Mammary epithelial cell (primary cell): ENCODE measurements at regions of chr3 and their contacts with region 1.

Region 1: DNA sequence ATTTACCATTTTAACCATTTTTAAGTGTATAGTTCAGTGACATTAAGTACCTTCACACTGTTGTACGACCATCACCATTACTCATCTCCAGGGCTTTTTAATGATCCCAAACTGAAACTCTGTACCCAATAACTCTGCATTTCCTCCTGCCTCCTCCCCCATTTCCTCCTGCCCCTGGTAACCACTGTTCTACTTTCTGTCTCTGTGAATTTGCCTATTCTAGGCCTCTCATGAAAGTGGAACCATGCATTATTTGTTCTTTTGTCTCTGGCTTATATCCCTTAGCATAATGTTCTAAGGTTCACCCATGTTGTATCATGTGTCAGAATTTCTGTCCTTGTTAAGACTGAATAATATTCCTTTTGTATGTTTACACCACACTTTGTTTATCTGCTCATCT is 154.2 kb downstream of the MECOM start:
- DNase-seq: no peak
- H3K4me3 ChIP-seq: no peak overlapping the region
- H3K27ac ChIP-seq: no peak overlapping the region
- H3K4me1 ChIP-seq: no peaks in the 10 kb centered on the region
- H3K27me3 ChIP-seq: no peaks in the 10 kb centered on the region
- CTCF ChIP-seq: no peak

Region 2: DNA sequence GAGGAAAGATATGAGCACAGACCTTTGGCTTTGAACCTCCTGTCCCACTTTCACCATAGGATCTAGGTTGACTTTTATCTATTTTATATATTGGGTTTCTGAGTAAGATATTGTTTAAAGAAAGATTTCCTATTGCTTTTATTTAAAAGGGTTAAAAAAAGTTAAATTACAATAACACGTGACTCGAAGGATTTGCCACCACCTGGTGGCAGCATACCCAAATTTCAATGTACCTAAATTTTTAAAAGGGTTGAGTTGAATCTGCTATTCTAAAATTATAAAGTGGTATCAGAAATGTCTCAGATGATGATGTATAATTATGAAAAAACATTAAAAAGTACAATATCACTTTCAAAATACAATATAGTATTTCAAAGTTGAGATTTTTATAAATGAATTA is 214.2 kb before region 1 on chr3:
- CTCF ChIA-PET with region 1: no interaction called
- dilution Hi-C with region 1: no loop called
- in situ Hi-C with region 1: no loop called
- intact Hi-C with region 1: loop called (anchors 1 kb)
- DNase-seq: no peak
- H3K4me3 ChIP-seq: no peak overlapping the region
- H3K27ac ChIP-seq: no peak overlapping the region
- H3K4me1 ChIP-seq: no peaks in the 10 kb centered on the region
- H3K27me3 ChIP-seq: no peaks in the 10 kb centered on the region
- CTCF ChIP-seq: peak; percentile 21 to 43

Region 3: DNA sequence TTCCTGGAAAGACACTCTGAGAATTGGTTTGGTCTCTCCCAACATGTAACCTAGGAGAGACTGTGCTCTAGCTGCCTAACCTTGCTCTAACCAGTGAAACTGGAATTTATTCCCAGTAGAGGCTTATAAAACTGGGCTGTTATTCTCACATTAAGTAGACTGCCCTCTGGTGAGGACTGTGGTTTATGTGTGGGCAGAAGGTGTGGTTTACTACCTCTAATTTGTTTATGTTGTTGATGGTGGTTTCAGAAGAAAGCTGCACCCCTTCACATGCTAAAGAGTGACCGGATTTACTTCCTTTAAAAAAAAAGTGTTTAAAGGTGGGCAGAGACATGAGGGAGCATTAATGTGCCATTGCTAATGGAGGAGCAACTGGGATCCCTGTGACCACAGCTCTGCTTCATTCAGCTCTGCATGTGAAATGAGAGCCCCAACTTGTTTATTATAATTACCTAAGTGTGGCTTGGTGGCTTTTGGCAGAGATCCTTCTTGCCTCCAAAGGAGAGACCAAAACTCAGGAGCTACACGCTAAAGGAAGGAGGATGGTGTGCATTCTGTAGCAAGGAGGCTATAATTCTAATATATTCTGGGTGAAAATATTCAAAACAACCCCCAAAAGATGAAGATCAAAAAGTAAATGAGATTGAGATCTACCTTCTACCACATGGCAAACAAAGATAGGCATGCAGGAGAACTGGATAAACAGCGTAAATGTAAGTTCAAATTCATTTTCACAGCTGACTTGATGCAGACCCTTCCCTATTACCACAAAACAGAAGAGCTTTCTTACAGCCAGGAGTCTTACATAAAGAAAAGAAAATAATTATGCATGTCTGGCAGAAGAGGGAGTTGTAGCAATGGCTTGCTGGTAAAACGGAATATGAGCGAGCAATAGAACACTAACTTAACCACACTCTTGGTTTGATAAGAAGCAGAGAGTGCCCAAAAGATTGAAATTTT is 118.8 kb before region 1 on chr3:
- CTCF ChIA-PET with region 1: no interaction called
- dilution Hi-C with region 1: no loop called
- in situ Hi-C with region 1: no loop called
- intact Hi-C with region 1: loop called (anchors 5 kb)
- DNase-seq: peak; percentile 49
- H3K4me3 ChIP-seq: no peak overlapping the region
- H3K27ac ChIP-seq: no peak overlapping the region
- H3K4me1 ChIP-seq: no peaks in the 10 kb centered on the region
- H3K27me3 ChIP-seq: no peaks in the 10 kb centered on the region
- CTCF ChIP-seq: peak; percentile 18 to 57

Region 4: DNA sequence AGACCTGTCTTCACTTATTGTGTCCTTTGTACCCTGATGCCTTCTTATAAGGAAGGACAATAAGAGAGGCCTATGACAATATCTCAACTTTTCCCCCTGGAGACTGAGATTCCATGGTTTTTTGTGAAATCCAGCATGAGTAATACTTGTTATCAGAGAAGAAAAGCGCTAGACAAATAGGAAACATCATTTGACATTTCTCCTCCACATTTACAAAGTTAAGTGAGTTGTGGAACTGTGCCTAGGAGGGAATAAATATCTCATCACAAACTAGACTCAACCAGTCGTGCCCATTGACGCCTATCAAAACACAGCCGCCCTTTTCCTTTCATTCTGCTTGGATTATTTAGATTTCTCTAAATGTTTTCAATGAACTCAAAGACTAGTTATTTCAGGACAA is 98.9 kb before region 1 on chr3:
- CTCF ChIA-PET with region 1: no interaction called
- dilution Hi-C with region 1: no loop called
- in situ Hi-C with region 1: loop called in 1 of 2 experiments (anchors 10 kb)
- intact Hi-C with region 1: no loop called
- DNase-seq: no peak
- H3K4me3 ChIP-seq: no peak overlapping the region
- H3K27ac ChIP-seq: no peak overlapping the region
- H3K4me1 ChIP-seq: no peaks in the 10 kb centered on the region
- H3K27me3 ChIP-seq: no peaks in the 10 kb centered on the region
- CTCF ChIP-seq: no peak

Region 5: DNA sequence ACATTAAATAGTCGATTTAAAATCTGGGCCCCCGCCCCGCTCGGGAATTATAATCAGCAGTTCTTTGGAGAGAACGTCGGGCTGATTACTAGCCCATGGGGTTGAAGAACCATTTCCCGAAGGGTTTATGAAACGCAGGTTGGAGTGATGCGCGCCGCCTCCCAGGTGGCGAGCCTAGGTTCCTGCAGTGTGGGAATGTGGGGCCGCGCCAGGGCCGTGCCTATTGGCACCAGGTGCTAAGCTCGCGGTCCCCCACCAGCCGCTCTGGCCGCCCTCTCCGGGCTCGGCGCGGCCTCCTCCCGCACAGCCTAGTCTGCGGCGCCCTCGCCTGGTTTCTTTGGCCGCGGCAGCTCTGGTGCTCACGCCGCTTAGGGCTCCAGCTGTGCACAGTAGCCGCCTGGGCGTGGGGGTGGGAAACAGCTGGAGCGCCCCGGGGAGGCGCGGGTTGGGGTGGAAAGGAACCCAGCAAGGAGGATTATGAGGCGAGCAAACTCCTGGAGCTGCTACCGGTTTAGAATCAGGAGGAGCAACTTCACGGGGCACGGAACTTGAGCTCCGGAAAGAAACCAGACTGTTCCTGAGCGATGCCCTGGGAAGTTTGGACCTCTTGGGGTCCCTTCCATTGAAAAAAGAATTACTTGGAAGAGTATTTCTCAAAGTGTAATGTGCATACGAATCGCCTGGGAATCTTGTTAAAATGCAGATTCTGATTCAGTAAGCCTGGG is 159.8 kb after region 1 on chr3:
- CTCF ChIA-PET with region 1: no interaction called
- dilution Hi-C with region 1: no loop called
- in situ Hi-C with region 1: no loop called
- intact Hi-C with region 1: loop called (anchors 10 kb)
- DNase-seq: peak; percentile 67
- H3K4me3 ChIP-seq: peak overlapping the region; percentile 41 to 46 (median 43)
- H3K27ac ChIP-seq: no peak overlapping the region
- H3K4me1 ChIP-seq: peaks cover 12% of the 10 kb centered on the region
- H3K27me3 ChIP-seq: peaks cover 50% of the 10 kb centered on the region
- CTCF ChIP-seq: peak; percentile 37 to 88

Region 6: DNA sequence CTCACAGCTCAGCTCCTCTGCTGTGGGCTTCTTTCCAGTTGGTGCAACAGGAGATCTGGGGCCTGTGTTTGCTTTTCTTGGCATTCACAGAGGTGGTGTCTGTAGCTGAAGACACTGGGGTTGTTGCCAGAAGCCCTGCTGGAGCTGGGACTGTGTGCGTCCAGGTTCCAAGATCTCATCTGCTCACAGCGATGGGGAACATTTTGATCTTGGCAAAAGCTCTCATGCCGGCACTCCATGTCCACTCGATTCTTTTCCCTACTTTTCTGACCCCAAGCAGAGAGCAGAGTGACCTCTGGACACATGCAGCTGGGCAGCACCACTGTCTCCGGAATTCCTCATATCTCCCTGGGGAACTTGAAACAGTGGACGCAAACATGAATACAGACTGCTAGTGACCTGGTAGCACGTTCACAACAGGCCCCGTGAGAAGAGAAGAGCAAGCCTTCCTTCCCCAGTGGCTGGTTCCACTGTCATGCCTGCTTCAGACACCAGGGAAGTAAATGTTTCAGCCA is 190.2 kb after region 1 on chr3:
- CTCF ChIA-PET with region 1: no interaction called
- dilution Hi-C with region 1: no loop called
- in situ Hi-C with region 1: no loop called
- intact Hi-C with region 1: no loop called
- DNase-seq: no peak
- H3K4me3 ChIP-seq: no peak overlapping the region
- H3K27ac ChIP-seq: no peak overlapping the region
- H3K4me1 ChIP-seq: no peaks in the 10 kb centered on the region
- H3K27me3 ChIP-seq: peaks cover 10% of the 10 kb centered on the region
- CTCF ChIP-seq: no peak